Breast epithelium (tissue), 4 donors: ENCODE measurements at regions of chr1 and their contacts with region 1.

Region 1: DNA sequence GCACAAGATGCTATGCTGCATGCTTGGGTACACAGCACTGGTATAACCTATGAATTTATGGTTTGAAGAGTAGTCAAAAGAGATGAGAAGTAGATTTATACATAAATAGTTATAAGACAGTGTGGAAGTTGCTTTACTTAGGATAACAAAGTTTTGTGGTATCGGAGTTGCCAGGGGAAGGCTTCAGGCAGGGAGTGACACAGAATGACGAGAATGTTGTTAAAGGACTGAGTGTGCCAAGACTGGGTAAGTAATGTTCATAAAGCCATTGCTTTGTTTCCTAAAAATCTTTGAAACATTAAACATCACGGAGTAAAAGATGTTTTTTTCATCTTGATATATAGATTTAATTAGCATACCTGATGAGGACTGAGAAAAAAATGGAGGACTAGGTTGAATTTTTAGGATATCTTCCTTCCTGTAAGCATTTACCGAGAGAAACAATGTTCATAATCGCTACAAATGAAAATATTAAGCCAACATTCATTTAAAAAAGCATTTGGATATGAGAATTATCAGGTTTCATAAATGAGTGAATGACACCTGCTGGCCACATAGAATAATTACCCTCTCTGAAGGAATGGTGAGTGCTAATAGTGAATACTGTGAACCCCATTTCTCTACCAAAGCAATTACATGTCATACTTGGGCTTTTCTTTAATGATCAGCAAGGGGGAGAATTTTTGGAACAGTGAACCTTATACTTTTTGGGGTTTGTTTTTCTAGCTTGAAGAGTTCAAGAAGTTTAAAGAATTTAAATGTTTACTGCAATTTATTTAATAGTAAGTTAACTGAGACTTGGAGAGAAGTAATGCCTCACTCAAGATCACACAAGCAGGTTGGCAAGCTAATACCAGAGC is 28.4 kb downstream of the EXTL2 start:
- DNase-seq: no peak
- H3K4me3 ChIP-seq: no peak overlapping the region
- H3K27ac ChIP-seq: no peak overlapping the region
- H3K4me1 ChIP-seq: no peaks in the 10 kb centered on the region
- H3K27me3 ChIP-seq: no peaks in the 10 kb centered on the region
- CTCF ChIP-seq: peak; percentile 44 to 70 (median 45)
- POLR2A ChIP-seq: no peak

Region 2: DNA sequence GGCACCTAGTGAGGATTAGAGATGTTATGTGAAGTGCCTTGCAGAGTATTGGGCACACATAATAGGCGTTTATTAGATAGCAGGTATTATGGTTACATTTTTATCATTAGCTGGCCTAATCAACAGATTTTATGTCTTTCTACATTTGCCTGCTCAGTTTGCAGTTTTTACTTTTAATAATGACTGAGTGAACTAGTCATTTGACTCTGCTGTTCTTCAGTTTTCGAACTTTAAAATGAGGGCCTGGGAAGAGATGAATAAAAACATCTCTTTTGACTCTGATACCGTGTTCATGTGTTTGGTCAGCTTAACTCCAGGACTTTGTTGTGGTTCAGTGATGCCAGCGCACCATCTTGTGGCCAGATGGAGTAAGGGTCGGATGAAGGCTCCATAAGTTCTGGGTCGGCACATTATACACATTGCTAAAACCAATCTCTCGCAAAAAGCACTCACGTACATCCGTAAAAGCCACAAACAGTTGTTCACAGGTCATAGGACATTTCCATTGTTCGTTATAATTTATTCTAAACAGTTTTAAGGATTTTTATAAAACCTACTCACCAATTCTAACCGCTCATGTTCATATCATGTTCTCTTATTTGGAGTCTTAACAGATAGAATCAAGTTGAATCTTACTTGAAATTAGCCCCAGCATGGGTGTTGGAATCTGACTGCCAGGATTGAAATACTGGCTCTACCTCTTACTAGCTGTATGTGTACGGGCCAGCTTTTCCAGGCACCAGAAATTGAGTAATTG is 406.7 kb before region 1 on chr1:
- intact Hi-C with region 1: loop called (anchors 10 kb)
- DNase-seq: peak; percentile 64 to 65
- H3K4me3 ChIP-seq: no peak overlapping the region
- H3K27ac ChIP-seq: peak overlapping the region in 1 of 2 donors; percentile 30
- H3K4me1 ChIP-seq: no peaks in the 10 kb centered on the region
- H3K27me3 ChIP-seq: no peaks in the 10 kb centered on the region
- CTCF ChIP-seq: peak; percentile 38 to 86 (median 82)
- POLR2A ChIP-seq: no peak

Region 3: GRCh38 chr1:100852976-100853375 is 13.3 kb before region 1 on chr1:
- intact Hi-C with region 1: loop called (anchors 1 kb)
- DNase-seq: no peak
- H3K4me3 ChIP-seq: no peak overlapping the region
- H3K27ac ChIP-seq: no peak overlapping the region
- H3K4me1 ChIP-seq: no peaks in the 10 kb centered on the region
- H3K27me3 ChIP-seq: no peaks in the 10 kb centered on the region
- CTCF ChIP-seq: no peak
- POLR2A ChIP-seq: no peak

Region 4: DNA sequence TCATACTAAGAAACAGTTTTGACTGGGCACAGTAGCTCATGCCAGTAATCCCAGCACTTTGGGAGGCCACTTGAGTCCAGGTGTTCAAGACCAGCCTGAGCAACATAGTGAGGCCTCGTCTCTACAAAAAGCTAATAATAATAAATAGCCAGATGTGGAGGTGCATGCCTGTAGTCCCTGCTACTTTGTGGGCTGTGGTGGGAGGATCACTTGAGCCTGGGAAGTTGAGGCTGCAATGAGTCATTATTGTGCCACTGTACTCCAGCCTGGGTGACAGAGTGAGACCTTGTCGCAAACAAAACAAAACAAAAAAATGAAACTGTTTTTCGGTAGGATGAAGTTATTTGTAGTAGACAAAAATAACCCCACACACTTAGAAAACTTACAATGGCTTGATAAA is 1149.5 kb after region 1 on chr1:
- intact Hi-C with region 1: no loop called
- DNase-seq: no peak
- H3K4me3 ChIP-seq: no peak overlapping the region
- H3K27ac ChIP-seq: no peak overlapping the region
- H3K4me1 ChIP-seq: no peaks in the 10 kb centered on the region
- H3K27me3 ChIP-seq: no peaks in the 10 kb centered on the region
- CTCF ChIP-seq: no peak
- POLR2A ChIP-seq: no peak